Activated CD4-positive, alpha-beta T cell treated with anti-CD3 and anti-CD28 coated beads for 36 hours (primary cell): ENCODE measurements at regions of chr11 and their contacts with region 1.

Region 1: GRCh38 chr11:535519-536454 is at the start of gene HRAS:
- DNase-seq: peak; percentile 98
- ATAC-seq: peak; percentile 93
- H3K4me3 Mint-ChIP-seq: peak within 1 kb of the TSS; percentile 79
- H3K27ac Mint-ChIP-seq: peak within 1 kb of the TSS; percentile 81
- H3K4me1 Mint-ChIP-seq: peaks cover 17% of the 10 kb centered on the region
- H3K27me3 Mint-ChIP-seq: no peaks in the 10 kb centered on the region
- total RNA-seq, gene HRAS: 26.8 to 41.9 TPM

Region 2: GRCh38 chr11:313787-314547 is 221.8 kb before region 1 on chr11 and contains the start of gene IFITM1:
- CTCF ChIA-PET with region 1: no interaction called
- POLR2A ChIA-PET with region 1: no interaction called
- intact Hi-C with region 1: loop called in 1 of 2 experiments (anchors 1 kb)
- DNase-seq: peak; percentile 78
- ATAC-seq: peak; percentile 40
- H3K4me3 Mint-ChIP-seq: peak within 1 kb of the TSS; percentile 95
- H3K27ac Mint-ChIP-seq: peak within 1 kb of the TSS; percentile 99
- H3K4me1 Mint-ChIP-seq: peaks cover 29% of the 10 kb centered on the region
- H3K27me3 Mint-ChIP-seq: no peaks in the 10 kb centered on the region
- total RNA-seq, gene IFITM1: 248 to 285 TPM

Region 3: GRCh38 chr11:416757-417621 is 118.8 kb before region 1 on chr11:
- CTCF ChIA-PET with region 1: no interaction called
- POLR2A ChIA-PET with region 1: no interaction called
- intact Hi-C with region 1: no loop called
- DNase-seq: peak; percentile 60
- ATAC-seq: peak; percentile 20
- H3K4me3 Mint-ChIP-seq: peak overlapping the region; percentile 85
- H3K27ac Mint-ChIP-seq: no peak overlapping the region
- H3K4me1 Mint-ChIP-seq: peaks cover 32% of the 10 kb centered on the region
- H3K27me3 Mint-ChIP-seq: no peaks in the 10 kb centered on the region

Region 4: DNA sequence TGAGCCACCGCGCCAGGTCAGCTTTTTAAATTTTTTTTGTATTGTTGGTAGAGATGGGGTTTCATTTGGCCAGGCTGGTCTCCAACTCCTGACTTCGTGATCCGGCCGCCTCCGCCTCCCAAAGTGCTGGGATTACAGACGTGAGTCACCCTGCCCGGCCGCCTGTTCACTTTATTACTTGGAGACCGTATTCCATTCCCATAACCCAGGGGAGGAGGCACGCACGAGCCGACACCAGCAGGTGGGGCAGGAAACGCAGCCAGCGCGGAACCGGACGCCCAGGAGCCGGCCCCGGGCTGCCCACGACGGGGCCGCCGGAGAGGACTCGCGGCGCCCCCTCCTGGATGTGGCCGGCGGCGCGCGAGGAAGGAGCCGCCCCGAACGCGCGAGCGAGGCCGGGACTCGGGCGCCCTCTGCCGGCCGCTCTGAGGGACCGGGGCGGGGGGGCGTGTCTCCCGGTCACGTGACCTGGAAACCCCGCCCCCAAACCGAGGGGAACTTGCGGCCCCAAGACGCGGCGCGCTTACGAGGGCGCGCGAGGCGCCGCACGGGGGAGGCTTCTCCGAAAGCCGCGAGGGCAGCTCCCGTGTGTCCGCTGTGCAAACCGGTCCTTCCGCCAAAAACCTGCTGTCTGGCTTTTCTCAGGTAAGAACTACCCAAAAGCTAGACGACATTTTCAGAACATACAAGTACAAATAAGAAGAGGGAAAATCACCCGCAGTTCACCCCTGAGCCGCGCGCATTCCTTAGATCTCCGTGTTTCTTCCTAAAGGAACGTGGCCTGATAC is 17.1 kb before region 1 on chr11:
- CTCF ChIA-PET with region 1: interaction called, 7 read pairs
- POLR2A ChIA-PET with region 1: interaction called, 6 read pairs
- intact Hi-C with region 1: loop called in 1 of 2 experiments (anchors 1 kb)
- DNase-seq: peak; percentile 94
- ATAC-seq: peak; percentile 95
- H3K4me3 Mint-ChIP-seq: peak overlapping the region; percentile 67
- H3K27ac Mint-ChIP-seq: peak overlapping the region; percentile 85
- H3K4me1 Mint-ChIP-seq: peaks cover 3% of the 10 kb centered on the region
- H3K27me3 Mint-ChIP-seq: no peaks in the 10 kb centered on the region

Region 5: GRCh38 chr11:568306-569157 is 32.7 kb after region 1 on chr11:
- CTCF ChIA-PET with region 1: interaction called, 4 read pairs
- POLR2A ChIA-PET with region 1: no interaction called
- intact Hi-C with region 1: loop called in 1 of 2 experiments (anchors 1 kb)
- DNase-seq: peak; percentile 97
- ATAC-seq: peak; percentile 93
- H3K4me3 Mint-ChIP-seq: peak overlapping the region; percentile 88
- H3K27ac Mint-ChIP-seq: peak overlapping the region; percentile 72
- H3K4me1 Mint-ChIP-seq: no peaks in the 10 kb centered on the region
- H3K27me3 Mint-ChIP-seq: no peaks in the 10 kb centered on the region

Region 6: GRCh38 chr11:727859-728748 is 192.3 kb after region 1 on chr11:
- CTCF ChIA-PET with region 1: no interaction called
- POLR2A ChIA-PET with region 1: no interaction called
- intact Hi-C with region 1: loop called in 1 of 2 experiments (anchors 5 kb)
- DNase-seq: peak; percentile 92
- ATAC-seq: peak; percentile 80
- H3K4me3 Mint-ChIP-seq: no peak overlapping the region
- H3K27ac Mint-ChIP-seq: no peak overlapping the region
- H3K4me1 Mint-ChIP-seq: peaks cover 5% of the 10 kb centered on the region
- H3K27me3 Mint-ChIP-seq: peaks cover 10% of the 10 kb centered on the region

Region 7: DNA sequence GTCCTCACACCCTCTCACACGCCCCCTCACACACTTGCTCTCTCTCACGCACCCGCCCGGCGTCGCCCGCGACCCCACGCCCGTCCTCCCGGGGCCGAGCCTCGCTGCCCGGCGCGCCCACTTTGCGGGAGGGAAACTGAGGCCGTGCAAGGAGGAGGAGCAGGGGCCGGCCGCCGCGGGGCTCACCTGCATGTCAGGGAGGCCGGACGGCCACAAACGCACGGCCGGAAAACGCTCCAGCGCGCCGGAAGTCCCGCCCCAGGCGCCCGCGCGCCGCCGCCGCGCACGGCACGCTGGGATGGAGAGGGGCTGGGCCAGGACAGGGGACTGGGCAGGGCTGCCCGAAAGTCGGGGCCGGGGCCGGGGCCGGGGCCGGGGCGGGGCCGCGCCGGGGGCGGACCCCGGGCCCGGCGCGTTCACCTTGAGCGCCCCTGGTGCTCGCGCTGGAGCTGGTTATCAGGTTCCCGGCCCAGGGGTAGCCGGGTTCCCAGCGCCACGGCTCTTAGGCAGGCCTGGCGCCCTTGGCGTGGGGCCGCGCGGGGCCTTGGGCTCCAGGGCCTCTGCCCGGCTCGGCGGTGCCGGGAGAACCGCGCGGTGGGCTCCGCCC is 374.9 kb after region 1 on chr11 and contains the start of gene CHID1:
- CTCF ChIA-PET with region 1: no interaction called
- POLR2A ChIA-PET with region 1: no interaction called
- intact Hi-C with region 1: loop called in 1 of 2 experiments (anchors 1 kb)
- DNase-seq: peak; percentile 92
- ATAC-seq: peak; percentile 98
- H3K4me3 Mint-ChIP-seq: peak within 1 kb of the TSS; percentile 88
- H3K27ac Mint-ChIP-seq: peak within 1 kb of the TSS; percentile 88
- H3K4me1 Mint-ChIP-seq: peaks cover 24% of the 10 kb centered on the region
- H3K27me3 Mint-ChIP-seq: no peaks in the 10 kb centered on the region
- total RNA-seq, gene CHID1: 60.4 to 75.3 TPM